IMR-90 (cell line): ENCODE measurements at regions of chr15 and their contacts with region 1.

Region 1: GRCh38 chr15:52018693-52019387 is at the start of gene MAPK6:
- DNase-seq: peak; percentile 93
- ATAC-seq: peak; percentile 89
- H3K4me3 ChIP-seq: peak within 1 kb of the TSS; percentile 90
- H3K27ac ChIP-seq: peak within 1 kb of the TSS; percentile 97
- H3K4me1 ChIP-seq: peaks cover 11% of the 10 kb centered on the region
- H3K27me3 ChIP-seq: no peaks in the 10 kb centered on the region
- CTCF ChIP-seq: no peak
- POLR2A ChIP-seq: peak; percentile 97
- RAD21 ChIP-seq: no peak
- total RNA-seq, gene MAPK6: 60.6 and 84.2 TPM in 2 replicates

Region 2: GRCh38 chr15:51907136-51907914 is 111.5 kb before region 1 on chr15:
- CTCF ChIA-PET with region 1: no interaction called
- POLR2A ChIA-PET with region 1: no interaction called
- dilution Hi-C with region 1: no loop called
- in situ Hi-C with region 1: no loop called
- intact Hi-C with region 1: no loop called
- DNase-seq: peak; percentile 42
- ATAC-seq: peak; percentile 27; the same call in 1 of the 2 replicates
- H3K4me3 ChIP-seq: no peak overlapping the region
- H3K27ac ChIP-seq: no peak overlapping the region
- H3K4me1 ChIP-seq: peaks cover 12% of the 10 kb centered on the region
- H3K27me3 ChIP-seq: no peaks in the 10 kb centered on the region
- CTCF ChIP-seq: no peak
- POLR2A ChIP-seq: no peak
- RAD21 ChIP-seq: no peak

Region 3: DNA sequence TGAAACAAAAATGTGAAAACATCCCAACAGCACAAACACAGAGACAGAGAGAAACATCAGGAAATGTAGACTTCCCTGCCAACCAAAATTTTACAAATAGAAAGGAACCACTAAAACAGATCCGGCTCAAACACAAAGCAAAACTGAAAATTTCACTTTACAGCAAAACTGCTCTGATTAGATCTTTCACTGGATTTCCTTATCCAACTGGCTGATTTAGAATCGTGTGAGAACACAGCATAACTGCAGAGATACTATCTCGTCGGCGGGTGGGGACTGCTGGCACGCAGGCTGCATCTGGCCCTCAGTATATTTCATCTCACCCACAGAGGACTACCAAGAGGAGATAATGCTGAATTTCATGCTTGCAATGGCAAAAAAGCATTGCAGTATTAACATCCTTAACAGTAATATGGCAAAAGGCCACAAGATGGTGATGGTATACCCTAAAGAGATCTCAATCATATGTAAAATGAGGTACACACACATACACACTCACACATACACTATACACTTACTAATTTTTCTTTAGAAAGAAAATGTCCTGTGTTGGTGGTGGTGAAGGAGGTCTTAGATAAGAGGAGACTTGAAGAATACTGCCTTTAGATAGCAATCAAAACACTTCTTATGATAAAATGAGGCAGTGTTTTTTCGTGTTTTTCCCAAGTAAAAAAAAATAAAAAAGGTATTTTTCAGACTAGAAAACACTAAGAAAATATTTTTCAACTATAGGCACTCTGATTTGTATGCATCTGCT is 36.6 kb before region 1 on chr15:
- CTCF ChIA-PET with region 1: no interaction called
- POLR2A ChIA-PET with region 1: no interaction called
- dilution Hi-C with region 1: no loop called
- in situ Hi-C with region 1: no loop called
- intact Hi-C with region 1: loop called (anchors 5 kb)
- DNase-seq: peak; percentile 82
- ATAC-seq: peak; percentile 89
- H3K4me3 ChIP-seq: no peak overlapping the region
- H3K27ac ChIP-seq: peak overlapping the region; percentile 9; the same call in 1 of the 2 replicates
- H3K4me1 ChIP-seq: peaks cover 3% of the 10 kb centered on the region
- H3K27me3 ChIP-seq: no peaks in the 10 kb centered on the region
- CTCF ChIP-seq: peak; percentile 82
- POLR2A ChIP-seq: 0 out of 2 replicates have a peak, but pooled peaks have one; percentile 35
- RAD21 ChIP-seq: peak; percentile 90

Region 4: GRCh38 chr15:52139599-52140491 is 121.0 kb after region 1 on chr15:
- CTCF ChIA-PET with region 1: no interaction called
- POLR2A ChIA-PET with region 1: interaction called, 3 read pairs
- dilution Hi-C with region 1: no loop called
- in situ Hi-C with region 1: no loop called
- intact Hi-C with region 1: loop called (anchors 2 kb)
- DNase-seq: peak; percentile 62
- ATAC-seq: peak; percentile 47
- H3K4me3 ChIP-seq: no peak overlapping the region
- H3K27ac ChIP-seq: no peak overlapping the region
- H3K4me1 ChIP-seq: peaks cover 21% of the 10 kb centered on the region
- H3K27me3 ChIP-seq: no peaks in the 10 kb centered on the region
- CTCF ChIP-seq: peak; percentile 80
- POLR2A ChIP-seq: no peak
- RAD21 ChIP-seq: peak; percentile 79

Region 5: GRCh38 chr15:52509500-52510245 is 490.8 kb after region 1 on chr15:
- CTCF ChIA-PET with region 1: no interaction called
- POLR2A ChIA-PET with region 1: interaction called, 19 read pairs
- dilution Hi-C with region 1: no loop called
- in situ Hi-C with region 1: no loop called
- intact Hi-C with region 1: no loop called
- DNase-seq: no peak
- ATAC-seq: no peak
- H3K4me3 ChIP-seq: no peak overlapping the region
- H3K27ac ChIP-seq: no peak overlapping the region
- H3K4me1 ChIP-seq: no peaks in the 10 kb centered on the region; the same call in 1 of the 2 replicates
- H3K27me3 ChIP-seq: no peaks in the 10 kb centered on the region
- CTCF ChIP-seq: no peak
- POLR2A ChIP-seq: no peak
- RAD21 ChIP-seq: no peak